ENCODE measurements at regions of chr2 and their contacts with region 1.

Region 1: DNA sequence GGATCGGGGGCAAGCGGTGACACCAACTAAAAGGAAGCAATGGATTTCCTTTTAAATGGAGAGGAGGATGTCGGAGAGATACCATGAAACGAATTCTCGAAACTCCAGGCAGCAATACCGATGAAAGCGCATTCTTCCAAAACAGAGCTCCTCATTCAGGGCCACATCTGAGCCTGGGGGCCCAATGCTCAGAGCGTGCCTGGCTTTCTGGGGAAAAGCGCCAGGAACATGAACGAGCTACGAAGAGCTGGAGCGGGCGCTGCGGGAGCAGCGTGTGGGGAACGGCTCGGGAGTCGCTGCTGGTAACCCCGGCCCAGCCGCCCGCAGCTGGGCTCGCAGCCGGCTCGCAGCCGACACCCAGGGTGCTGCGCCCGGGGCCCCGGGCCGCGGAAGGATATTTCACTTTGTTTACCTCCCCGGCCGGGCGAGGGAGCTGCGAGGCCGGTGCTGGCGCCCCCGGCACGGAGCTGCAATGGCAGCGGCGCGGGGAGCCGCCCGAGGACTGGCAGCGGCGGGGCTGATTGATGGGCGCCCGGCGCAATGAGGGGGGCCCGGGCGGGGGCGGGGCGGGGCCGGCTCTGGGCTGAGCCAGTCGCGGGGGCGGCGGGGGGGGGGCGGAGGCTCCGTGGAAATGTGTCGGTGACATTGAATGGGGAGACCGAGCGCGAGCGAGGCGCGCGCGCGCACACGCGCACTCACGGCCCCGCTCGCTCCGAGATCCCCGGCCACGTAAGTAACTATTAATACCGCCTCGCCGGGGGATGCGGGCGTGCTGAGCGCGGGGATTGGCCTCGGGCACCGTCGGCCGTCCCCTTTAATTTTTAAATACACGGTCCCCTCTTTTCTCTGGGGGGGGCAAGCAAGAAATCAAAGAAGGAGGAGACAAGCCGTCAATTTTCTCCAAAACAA is at the start of gene TRIB2:
- DNase-seq: peak; percentile 88 to 96 (median 94)
- ATAC-seq: peak; percentile 78
- H3K4me3 ChIP-seq: peak within 1 kb of the TSS; percentile 64
- H3K27ac ChIP-seq: peak within 1 kb of the TSS; percentile 86
- H3K4me1 ChIP-seq: peaks cover 13 to 30% of the 10 kb centered on the region in 2 experiments; a peak in 4 of 5 replicates
- H3K27me3 ChIP-seq: no peaks in the 10 kb centered on the region
- CTCF ChIP-seq: peak; percentile 19 to 46 (median 35); a peak in 4 of 6 replicates
- EP300 ChIP-seq: no peak
- POLR2A ChIP-seq: peak; percentile 73
- RAD21 ChIP-seq: no peak; a peak in 2 of 4 replicates
- polyA plus RNA-seq, gene TRIB2: 9.0 to 12.2 TPM

Region 2: DNA sequence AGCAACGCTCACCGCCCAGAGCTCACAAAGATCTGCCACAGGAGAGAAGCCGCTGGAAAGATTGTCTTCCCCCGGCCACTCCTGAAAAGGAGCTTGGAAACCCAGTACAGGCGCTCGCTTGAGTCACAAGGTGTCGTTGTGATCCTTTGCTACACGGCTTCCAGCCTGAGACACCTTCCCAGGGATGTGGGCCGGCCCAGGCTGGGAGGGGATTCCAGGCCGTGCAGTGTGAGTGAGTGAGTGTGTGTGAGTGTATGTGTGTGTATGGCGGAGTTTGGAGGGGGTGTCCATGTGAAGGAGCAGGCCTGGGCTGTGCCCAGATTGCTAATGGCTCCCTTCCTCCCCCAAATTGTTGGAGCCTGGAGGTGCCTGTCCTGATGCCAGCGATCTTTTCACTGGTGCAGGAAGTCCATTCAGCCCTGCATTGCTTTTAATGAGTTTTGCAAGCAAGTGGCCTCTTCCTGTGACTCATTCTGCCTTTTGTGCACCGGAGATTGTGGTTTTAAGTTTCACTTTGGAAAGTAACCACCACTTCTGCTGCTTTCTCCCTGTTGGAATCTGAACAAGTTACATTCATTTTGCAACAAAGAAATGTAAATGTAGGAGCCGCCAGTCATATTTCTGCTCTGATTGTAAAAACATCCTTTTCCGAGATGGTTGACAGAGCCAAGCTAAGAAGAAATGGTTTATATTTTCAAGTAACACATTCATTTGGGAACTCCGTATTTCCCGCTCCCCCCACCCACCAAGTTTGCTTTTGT is 886.4 kb before region 1 on chr2:
- CTCF ChIA-PET with region 1: interaction called, 22 read pairs
- POLR2A ChIA-PET with region 1: interaction called, 4 read pairs
- in situ Hi-C with region 1: loop called (anchors 5 kb)
- intact Hi-C with region 1: loop called (anchors 1 kb)
- DNase-seq: peak; percentile 74 to 88 (median 80)
- ATAC-seq: peak; percentile 96
- H3K4me3 ChIP-seq: peak overlapping the region; percentile 31
- H3K27ac ChIP-seq: peak overlapping the region; percentile 89
- H3K4me1 ChIP-seq: peaks cover 10 to 26% of the 10 kb centered on the region in 2 experiments
- H3K27me3 ChIP-seq: no peaks in the 10 kb centered on the region
- CTCF ChIP-seq: peak; percentile 68 to 81 (median 71)
- EP300 ChIP-seq: peak; percentile 77
- POLR2A ChIP-seq: peak; percentile 56
- RAD21 ChIP-seq: peak; percentile 92

Region 3: GRCh38 chr2:12169721-12170120 is 546.8 kb before region 1 on chr2:
- CTCF ChIA-PET with region 1: no interaction called
- POLR2A ChIA-PET with region 1: no interaction called
- in situ Hi-C with region 1: loop called (anchors 25 kb)
- intact Hi-C with region 1: loop called (anchors 1 kb)
- DNase-seq: no peak
- ATAC-seq: no peak
- H3K4me3 ChIP-seq: no peak overlapping the region
- H3K27ac ChIP-seq: peak overlapping the region; percentile 51; the same call in 1 of the 3 replicates
- H3K4me1 ChIP-seq: peaks cover 12 to 17% of the 10 kb centered on the region in 2 experiments; a peak in 4 of 5 replicates
- H3K27me3 ChIP-seq: no peaks in the 10 kb centered on the region
- CTCF ChIP-seq: no peak
- EP300 ChIP-seq: no peak
- POLR2A ChIP-seq: no peak
- RAD21 ChIP-seq: no peak

Region 4: DNA sequence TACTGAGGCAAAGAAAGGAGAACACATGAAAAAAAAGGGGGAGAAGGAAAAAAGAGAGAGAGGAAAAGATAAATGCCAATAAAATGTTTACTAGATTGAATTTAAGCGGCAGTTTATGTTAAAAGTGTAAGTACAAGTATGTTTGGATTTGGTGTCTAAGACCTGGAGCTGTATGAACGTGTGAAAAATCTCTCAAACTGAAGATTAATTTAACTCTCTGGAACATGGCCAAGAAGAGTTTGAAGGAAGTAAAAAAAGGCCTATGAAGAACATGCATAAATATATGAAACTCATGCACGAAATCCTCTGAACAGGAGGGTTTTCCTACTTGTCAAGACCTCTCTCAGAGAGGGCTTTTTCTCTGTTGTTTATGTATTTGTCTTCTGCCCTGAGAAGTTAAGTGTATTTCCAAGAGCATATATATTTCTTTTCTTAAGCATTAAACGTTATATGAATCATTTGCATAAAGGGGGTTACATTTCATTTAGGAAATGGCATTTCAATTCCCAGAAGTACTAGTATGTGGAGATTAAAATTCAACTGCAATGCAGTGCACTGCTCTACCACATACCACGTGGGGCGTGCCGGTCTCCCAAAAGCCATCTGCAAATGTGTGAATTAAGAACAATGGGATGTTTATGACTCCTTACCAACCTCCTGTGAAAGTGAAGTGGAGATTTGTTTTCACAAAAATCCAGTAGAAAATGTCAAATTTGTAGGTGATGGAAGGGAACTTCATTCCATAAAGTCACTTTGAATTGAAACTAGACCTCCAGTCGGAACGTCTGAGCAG is 280.9 kb before region 1 on chr2:
- CTCF ChIA-PET with region 1: no interaction called
- POLR2A ChIA-PET with region 1: no interaction called
- in situ Hi-C with region 1: no loop called
- intact Hi-C with region 1: loop called (anchors 1 kb)
- DNase-seq: peak in 2 of 4 experiments; percentile 21 to 31
- ATAC-seq: peak; percentile 56; the same call in 2 of the 3 replicates
- H3K4me3 ChIP-seq: no peak overlapping the region
- H3K27ac ChIP-seq: peak overlapping the region; percentile 48
- H3K4me1 ChIP-seq: peaks cover 14 to 41% of the 10 kb centered on the region in 2 experiments
- H3K27me3 ChIP-seq: no peaks in the 10 kb centered on the region
- CTCF ChIP-seq: no peak
- EP300 ChIP-seq: no peak
- POLR2A ChIP-seq: no peak
- RAD21 ChIP-seq: no peak

Region 5: DNA sequence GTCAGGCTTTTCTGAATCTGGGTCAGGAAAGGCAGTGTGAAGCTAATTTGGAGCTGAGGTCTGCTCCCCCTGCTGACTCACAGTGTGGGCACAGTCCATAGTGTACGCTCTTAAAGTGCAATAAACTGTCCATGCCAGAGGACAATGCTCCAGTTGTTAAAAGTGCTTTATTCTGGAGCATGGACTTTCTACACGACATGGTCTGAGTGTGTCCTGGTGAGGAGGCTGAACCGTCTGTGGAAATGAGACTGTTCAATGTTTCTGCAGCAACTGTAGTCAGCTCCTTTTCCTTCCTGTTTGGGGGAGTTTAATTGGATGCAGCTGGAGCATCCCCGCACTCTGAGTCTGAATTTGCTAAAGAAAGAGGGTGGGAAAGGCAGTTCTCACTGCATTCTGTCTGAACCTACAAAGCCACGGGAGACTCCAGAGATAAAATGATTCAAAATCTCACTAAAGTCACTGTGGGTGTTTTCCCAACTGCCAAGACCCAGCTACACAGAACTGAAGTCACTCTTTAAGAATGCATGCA is 110.0 kb before region 1 on chr2:
- CTCF ChIA-PET with region 1: no interaction called
- POLR2A ChIA-PET with region 1: interaction called, 3 read pairs
- in situ Hi-C with region 1: no loop called
- intact Hi-C with region 1: loop called (anchors 5 kb)
- DNase-seq: peak in 1 of 4 experiments; percentile 33
- ATAC-seq: peak; percentile 85
- H3K4me3 ChIP-seq: no peak overlapping the region
- H3K27ac ChIP-seq: no peak overlapping the region
- H3K4me1 ChIP-seq: peaks cover 5 to 17% of the 10 kb centered on the region in 2 experiments; a peak in 4 of 5 replicates
- H3K27me3 ChIP-seq: no peaks in the 10 kb centered on the region
- CTCF ChIP-seq: peak in 2 of 3 experiments; percentile 22 to 39; a peak in 2 of 6 replicates
- EP300 ChIP-seq: no peak
- POLR2A ChIP-seq: no peak
- RAD21 ChIP-seq: peak in 1 of 2 experiments; percentile 43; a peak in 2 of 4 replicates

Region 6: GRCh38 chr2:13006829-13007717 is 290.5 kb after region 1 on chr2:
- CTCF ChIA-PET with region 1: no interaction called
- POLR2A ChIA-PET with region 1: interaction called, 3 read pairs
- in situ Hi-C with region 1: no loop called
- intact Hi-C with region 1: loop called (anchors 1 kb)
- DNase-seq: peak; percentile 68 to 84 (median 72)
- ATAC-seq: peak; percentile 97
- H3K4me3 ChIP-seq: no peak overlapping the region
- H3K27ac ChIP-seq: no peak overlapping the region
- H3K4me1 ChIP-seq: peaks cover 0 to 2% of the 10 kb centered on the region in 2 experiments; a peak in 1 of 5 replicates
- H3K27me3 ChIP-seq: peaks cover 0 to 5% of the 10 kb centered on the region in 2 experiments; a peak in 1 of 5 replicates
- CTCF ChIP-seq: peak; percentile 77 to 85 (median 77)
- EP300 ChIP-seq: no peak
- POLR2A ChIP-seq: no peak
- RAD21 ChIP-seq: peak; percentile 94 to 95